Mucosa of descending colon (tissue), 3 donors: ENCODE measurements at regions of chr1 and their contacts with region 1.

Region 1: DNA sequence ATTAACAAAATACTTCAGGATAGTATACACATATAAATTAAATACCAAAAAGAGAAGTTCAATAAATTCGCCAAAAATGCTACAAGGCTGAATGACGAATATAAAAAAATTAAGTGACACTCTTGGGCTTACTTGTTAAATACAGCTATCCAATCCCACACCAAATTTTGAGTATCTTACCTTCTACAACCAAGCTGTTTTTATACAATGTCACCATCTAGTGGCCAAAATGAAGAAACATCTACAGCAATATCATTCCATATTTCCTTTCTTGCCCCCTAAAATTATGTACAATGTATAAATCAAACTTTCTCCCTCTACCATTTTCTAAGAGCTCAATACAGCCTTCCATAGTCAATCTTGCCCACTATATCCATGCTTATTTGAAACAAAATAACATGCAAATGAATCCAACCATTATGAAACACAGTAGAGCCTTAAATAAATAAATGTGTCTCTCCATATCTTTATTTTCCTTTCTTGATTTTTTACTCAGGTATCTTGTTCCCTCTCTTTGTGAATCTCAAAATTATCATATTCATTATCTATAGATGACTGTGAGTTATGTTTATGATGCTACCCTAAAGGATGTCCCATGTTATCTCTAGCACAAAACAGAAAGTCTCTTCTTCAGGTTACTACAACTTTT is 86.3 kb downstream of the ACBD6 start:
- DNase-seq: no peak
- ATAC-seq: no peak
- H3K4me3 ChIP-seq: no peak overlapping the region
- H3K4me1 ChIP-seq: no peaks in the 10 kb centered on the region
- CTCF ChIP-seq: peak; percentile 7

Region 2: DNA sequence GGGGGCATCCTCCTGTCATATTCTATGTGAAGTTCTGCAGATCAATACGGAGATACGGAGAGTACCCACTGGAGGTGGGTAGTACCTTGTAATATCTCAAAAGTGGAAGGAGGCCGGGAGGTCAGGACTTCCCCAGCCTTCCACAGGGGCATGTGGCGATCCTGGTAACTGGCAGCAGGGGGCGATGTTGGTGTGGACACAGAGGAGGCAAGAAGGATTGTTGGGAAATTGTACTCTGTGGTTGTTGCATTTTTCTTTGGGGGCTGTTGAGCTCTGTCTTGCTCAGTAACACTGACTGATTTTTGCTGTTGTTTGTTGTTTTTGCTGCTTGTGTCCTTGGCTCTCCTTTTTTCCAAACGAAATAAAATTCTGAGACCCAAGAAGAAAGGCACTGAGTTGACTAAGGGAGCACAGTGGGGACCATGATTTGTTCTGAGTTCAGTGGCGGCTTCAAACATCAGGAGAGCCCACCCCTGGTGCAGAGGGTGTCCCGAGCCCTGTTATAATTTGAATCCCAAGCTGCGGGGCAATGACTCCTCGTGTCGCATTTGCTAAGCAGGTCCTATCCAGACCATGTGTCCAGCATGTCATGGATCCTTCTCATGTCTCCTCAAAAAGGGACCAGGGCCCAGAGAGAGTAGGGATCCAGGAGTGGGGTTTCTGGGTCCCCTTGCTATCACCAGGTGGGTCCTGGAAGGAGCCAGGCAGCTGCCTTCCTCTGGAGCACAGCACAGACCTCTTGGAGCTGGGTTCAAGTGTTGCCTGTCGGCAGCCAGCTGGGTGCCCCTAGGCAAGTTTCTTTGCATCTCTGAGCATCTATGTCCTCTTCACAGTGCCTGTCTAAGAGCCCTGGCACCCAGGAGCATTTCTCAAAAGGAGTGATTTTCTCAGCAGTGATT is 163.2 kb before region 1 on chr1:
- intact Hi-C with region 1: loop called in 1 of 2 experiments (anchors 5 kb)
- DNase-seq: peak; percentile 80 to 88 (median 88)
- ATAC-seq: peak; percentile 85
- H3K4me3 ChIP-seq: no peak overlapping the region
- H3K4me1 ChIP-seq: no peaks in the 10 kb centered on the region
- CTCF ChIP-seq: peak; percentile 75